ENCODE measurements at regions of chr15 and their contacts with region 1.

Region 1: GRCh38 chr15:85356276-85356675 is 24.1 kb upstream of the AKAP13 start:
- DNase-seq: no peak
- CTCF ChIP-seq: no peak

Region 2: GRCh38 chr15:85367741-85368140 is 11.5 kb after region 1 on chr15:
- CTCF ChIA-PET with region 1: interaction called, 11 read pairs
- POLR2A ChIA-PET with region 1: no interaction called
- DNase-seq: no peak
- CTCF ChIP-seq: no peak

Measured in GM10248 (cell line).